MCF 10A (cell line): ENCODE measurements at regions of chr3 and their contacts with region 1.

Region 1: DNA sequence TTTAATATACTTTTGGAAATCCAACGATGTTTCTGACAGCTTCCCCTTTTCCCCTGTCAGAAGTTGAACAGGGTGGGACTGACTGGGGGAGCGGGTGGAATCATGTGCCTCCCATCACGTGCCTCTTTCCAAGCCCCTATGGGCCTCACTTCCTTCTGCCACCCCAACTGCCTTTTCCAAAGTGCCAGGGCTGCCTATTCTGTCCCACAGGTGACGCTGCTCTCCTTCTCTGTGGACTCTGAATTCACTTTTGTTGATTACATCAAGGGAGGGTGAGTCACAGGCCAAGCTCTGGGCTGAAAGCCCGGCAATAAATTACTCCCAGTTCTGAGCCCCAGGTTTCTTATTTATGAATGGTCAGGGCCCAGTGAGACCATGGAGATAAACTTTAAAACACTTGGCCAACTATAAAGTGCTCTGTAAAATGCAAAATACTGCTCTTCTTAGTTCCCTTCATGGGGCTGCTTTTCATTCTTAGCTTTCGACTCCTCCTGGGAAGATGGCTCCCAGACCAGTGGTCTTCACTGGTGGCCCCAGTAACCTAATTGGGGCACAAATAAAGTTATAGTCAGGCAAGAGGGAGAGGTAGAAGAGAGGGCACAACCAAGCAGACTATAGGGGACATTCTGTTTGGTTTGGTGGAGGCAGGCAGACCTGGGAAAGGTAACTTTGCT is 12.3 kb downstream of the CPNE9 start:
- DNase-seq: peak; percentile 93
- H3K4me3 Mint-ChIP-seq: no peak overlapping the region
- H3K27ac Mint-ChIP-seq: no peak overlapping the region
- H3K4me1 Mint-ChIP-seq: peaks cover 7% of the 10 kb centered on the region
- H3K27me3 Mint-ChIP-seq: peaks cover 51% of the 10 kb centered on the region
- CTCF ChIP-seq: peak; percentile 89

Region 2: GRCh38 chr3:9703736-9704346 is 12.1 kb before region 1 on chr3 and contains the start of gene CPNE9:
- CTCF ChIA-PET with region 1: interaction called, 13 read pairs
- POLR2A ChIA-PET with region 1: no interaction called
- intact Hi-C with region 1: no loop called
- DNase-seq: no peak
- H3K4me3 Mint-ChIP-seq: peak within 1 kb of the TSS; percentile 61
- H3K27ac Mint-ChIP-seq: no peak within 1 kb of the TSS
- H3K4me1 Mint-ChIP-seq: no peaks in the 10 kb centered on the region
- H3K27me3 Mint-ChIP-seq: peaks cover 23% of the 10 kb centered on the region
- CTCF ChIP-seq: no peak
- total RNA-seq, gene CPNE9: not detected in 2 replicates

Region 3: GRCh38 chr3:9731206-9732079 is 15.5 kb after region 1 on chr3 and contains the start of gene BRPF1:
- CTCF ChIA-PET with region 1: interaction called, 15 read pairs
- POLR2A ChIA-PET with region 1: interaction called, 12 read pairs
- intact Hi-C with region 1: no loop called
- DNase-seq: peak; percentile 99
- H3K4me3 Mint-ChIP-seq: peak within 1 kb of the TSS; percentile 76
- H3K27ac Mint-ChIP-seq: peak within 1 kb of the TSS; percentile 98
- H3K4me1 Mint-ChIP-seq: peaks cover 35% of the 10 kb centered on the region
- H3K27me3 Mint-ChIP-seq: no peaks in the 10 kb centered on the region
- CTCF ChIP-seq: no peak
- total RNA-seq, gene BRPF1: 19.9 and 21.4 TPM in 2 replicates

Region 4: DNA sequence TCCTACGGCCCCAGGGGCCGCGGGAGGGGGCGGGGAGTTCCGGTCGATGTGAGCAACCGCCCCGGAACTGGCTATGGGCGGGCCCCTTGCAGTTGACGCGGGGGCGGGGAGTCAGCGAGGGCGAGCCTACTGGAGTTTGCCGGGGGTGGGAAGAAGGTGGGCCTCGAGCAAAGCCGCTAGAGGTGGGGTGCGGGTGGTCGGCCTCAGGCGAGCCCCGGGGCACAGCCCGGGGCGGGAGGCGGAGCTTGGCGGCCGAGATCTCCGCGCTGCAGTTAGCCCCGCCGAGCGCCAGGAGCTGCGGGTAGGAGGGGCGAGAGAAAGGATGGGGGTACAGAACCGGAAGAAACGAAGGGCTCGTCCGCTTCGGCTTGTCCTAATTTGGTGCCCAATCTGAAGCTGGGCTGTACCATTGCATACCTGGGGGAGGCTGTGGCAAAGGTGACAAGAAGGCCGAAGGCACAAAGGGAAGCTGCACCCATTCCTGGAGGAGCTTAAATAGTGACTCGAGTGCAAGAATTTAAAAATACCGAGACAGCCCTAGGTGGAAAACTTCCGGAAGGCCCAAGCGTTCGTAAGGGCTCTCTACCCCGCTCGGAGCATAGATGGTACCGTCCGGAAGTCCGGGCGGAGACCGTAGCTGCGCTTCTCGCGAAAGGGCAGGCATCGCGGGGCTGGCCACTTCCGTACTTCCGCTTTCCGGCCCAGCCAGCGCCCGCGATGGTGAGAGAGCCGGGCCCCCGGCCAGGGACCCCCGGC is 76.7 kb after region 1 on chr3 and contains the starts of genes ARPC4 and TADA3:
- CTCF ChIA-PET with region 1: interaction called, 3 read pairs
- POLR2A ChIA-PET with region 1: interaction called, 3 read pairs
- intact Hi-C with region 1: loop called (anchors 5 kb)
- DNase-seq: peak; percentile 96
- H3K4me3 Mint-ChIP-seq: peak within 1 kb of the TSS; percentile 98
- H3K27ac Mint-ChIP-seq: peak within 1 kb of the TSS; percentile 100
- H3K4me1 Mint-ChIP-seq: peaks cover 31% of the 10 kb centered on the region
- H3K27me3 Mint-ChIP-seq: no peaks in the 10 kb centered on the region
- CTCF ChIP-seq: no peak
- total RNA-seq, gene ARPC4: 122 and 132 TPM in 2 replicates
- total RNA-seq, gene TADA3: 72.0 and 77.1 TPM in 2 replicates

Region 5: DNA sequence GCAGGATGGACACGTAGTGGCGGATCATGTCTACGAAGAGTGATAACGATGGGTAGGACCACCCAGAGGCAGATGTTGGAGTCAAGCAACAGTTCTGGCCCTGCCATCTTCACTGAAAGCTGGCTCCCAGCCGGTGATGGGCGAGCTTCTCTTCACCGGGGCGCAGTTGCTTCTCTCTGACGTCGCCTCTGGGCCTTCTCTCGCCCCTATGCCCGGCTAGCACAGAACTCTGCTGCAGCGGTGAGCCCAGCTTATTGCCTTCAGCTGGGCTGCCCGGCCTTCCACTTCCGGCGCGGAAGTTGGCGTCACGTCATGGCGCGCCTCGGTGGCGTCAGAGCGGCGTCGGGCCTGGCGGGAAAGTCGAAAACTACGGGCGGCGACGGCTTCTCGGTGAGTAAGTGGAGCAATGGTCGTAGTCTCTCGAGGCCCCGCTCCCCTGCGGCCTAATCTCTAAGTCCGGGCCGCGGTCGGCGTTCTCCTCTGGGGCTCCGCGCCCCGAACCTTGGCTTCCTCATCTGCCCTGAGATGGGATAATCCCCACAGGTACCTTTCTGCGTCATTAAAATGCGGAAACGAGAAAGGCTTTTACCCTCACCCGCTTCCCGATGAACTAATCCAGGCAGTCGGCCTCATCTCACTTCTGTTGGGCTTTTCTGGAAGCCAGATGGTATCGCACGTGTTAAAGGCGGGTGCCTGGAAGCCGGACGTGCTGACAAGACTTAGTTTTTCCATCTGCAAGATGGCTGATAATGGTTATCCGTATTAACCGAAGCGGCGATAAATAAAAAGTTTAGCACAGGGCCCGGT is 310.4 kb after region 1 on chr3 and contains the start of gene FANCD2:
- CTCF ChIA-PET with region 1: no interaction called
- POLR2A ChIA-PET with region 1: no interaction called
- intact Hi-C with region 1: loop called (anchors 5 kb)
- DNase-seq: peak; percentile 85
- H3K4me3 Mint-ChIP-seq: peak within 1 kb of the TSS; percentile 88
- H3K27ac Mint-ChIP-seq: peak within 1 kb of the TSS; percentile 87
- H3K4me1 Mint-ChIP-seq: peaks cover 11% of the 10 kb centered on the region
- H3K27me3 Mint-ChIP-seq: no peaks in the 10 kb centered on the region
- CTCF ChIP-seq: no peak
- total RNA-seq, gene FANCD2: 14.6 and 24.6 TPM in 2 replicates